CD4-positive, alpha-beta T cell (primary cell): ENCODE measurements at regions of chr6 and their contacts with region 1.

Region 1: DNA sequence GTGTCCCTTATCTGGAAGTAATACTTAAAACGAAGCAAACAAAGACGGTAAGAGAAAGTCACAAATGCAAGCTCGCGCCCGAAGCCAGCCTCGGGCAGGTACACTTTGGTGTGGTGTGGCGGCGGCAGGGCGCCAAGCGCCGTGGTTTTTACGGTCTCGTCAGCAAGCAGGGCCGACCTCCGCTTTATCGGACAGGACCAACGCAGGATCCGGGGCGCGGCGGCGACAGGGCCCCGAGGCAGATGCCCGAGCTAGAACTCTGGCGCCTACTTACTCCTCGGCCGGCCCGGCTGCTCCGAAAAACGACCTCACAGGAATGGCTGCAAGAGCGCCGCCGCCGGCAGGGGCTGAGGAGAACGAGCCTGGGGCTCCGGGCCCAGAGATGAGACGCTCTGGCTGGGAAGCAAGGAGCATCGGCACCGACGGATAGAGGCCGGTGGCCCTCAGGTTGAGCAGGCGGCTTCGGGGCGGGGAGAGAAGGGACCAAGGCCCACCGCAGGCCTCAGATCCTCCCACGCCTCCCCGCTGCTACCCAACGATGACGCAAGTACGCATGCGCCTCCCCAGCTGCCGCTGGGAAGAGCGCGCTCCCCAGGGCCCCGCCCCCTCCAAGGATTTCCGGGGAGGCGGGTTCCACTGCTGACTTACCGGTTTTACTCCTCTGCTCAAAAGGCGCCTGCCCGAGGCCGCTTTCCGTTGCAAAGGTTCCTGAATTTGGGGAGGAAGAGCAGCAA is 60.6 kb downstream of the FAM217A start:
- DNase-seq: peak; percentile 91 to 99 (median 94)
- ATAC-seq: peak; percentile 63
- H3K4me3 ChIP-seq: peak overlapping the region; percentile 92
- H3K4me3 Mint-ChIP-seq: peak overlapping the region; percentile 98
- H3K27ac ChIP-seq: peak overlapping the region; percentile 96
- H3K27ac Mint-ChIP-seq: peak overlapping the region; percentile 96
- H3K4me1 ChIP-seq: peaks cover 48% of the 10 kb centered on the region
- H3K4me1 Mint-ChIP-seq: peaks cover 84% of the 10 kb centered on the region
- H3K27me3 ChIP-seq: no peaks in the 10 kb centered on the region
- H3K27me3 Mint-ChIP-seq: no peaks in the 10 kb centered on the region
- CTCF ChIP-seq: peak; percentile 38

Region 2: GRCh38 chr6:2765166-2765895 is 1253.0 kb before region 1 on chr6 and contains the start of gene WRNIP1:
- CTCF ChIA-PET with region 1: no interaction called
- POLR2A ChIA-PET with region 1: interaction called, 4 read pairs
- intact Hi-C with region 1: loop called (anchors 5 to 10 kb)
- DNase-seq: peak; percentile 92 to 99 (median 96)
- ATAC-seq: peak; percentile 83
- H3K4me3 ChIP-seq: peak within 1 kb of the TSS; percentile 78
- H3K4me3 Mint-ChIP-seq: peak within 1 kb of the TSS; percentile 97
- H3K27ac ChIP-seq: peak within 1 kb of the TSS; percentile 80 to 96
- H3K27ac Mint-ChIP-seq: peak within 1 kb of the TSS; percentile 97
- H3K4me1 ChIP-seq: peaks cover 34% of the 10 kb centered on the region
- H3K4me1 Mint-ChIP-seq: peaks cover 61% of the 10 kb centered on the region
- H3K27me3 ChIP-seq: no peaks in the 10 kb centered on the region
- H3K27me3 Mint-ChIP-seq: no peaks in the 10 kb centered on the region
- CTCF ChIP-seq: peak; percentile 44
- total RNA-seq, gene WRNIP1: 22.4 to 25.2 TPM

Region 3: GRCh38 chr6:3258720-3259490 is 759.4 kb before region 1 on chr6 and contains the start of gene PSMG4:
- CTCF ChIA-PET with region 1: interaction called, 6 read pairs
- POLR2A ChIA-PET with region 1: interaction called, 8 read pairs
- intact Hi-C with region 1: loop called in 1 of 2 experiments (anchors 5 kb)
- DNase-seq: peak; percentile 83 to 96 (median 92)
- ATAC-seq: peak; percentile 74
- H3K4me3 ChIP-seq: peak within 1 kb of the TSS; percentile 80
- H3K4me3 Mint-ChIP-seq: peak within 1 kb of the TSS; percentile 96
- H3K27ac ChIP-seq: peak within 1 kb of the TSS in 1 of 2 donors; percentile 50
- H3K27ac Mint-ChIP-seq: peak within 1 kb of the TSS; percentile 92
- H3K4me1 ChIP-seq: peaks cover 45% of the 10 kb centered on the region
- H3K4me1 Mint-ChIP-seq: peaks cover 42% of the 10 kb centered on the region
- H3K27me3 ChIP-seq: no peaks in the 10 kb centered on the region
- H3K27me3 Mint-ChIP-seq: no peaks in the 10 kb centered on the region
- CTCF ChIP-seq: no peak
- total RNA-seq, gene PSMG4: 12.3 to 12.8 TPM

Region 4: GRCh38 chr6:3848925-3849605 is 169.3 kb before region 1 on chr6 and contains the start of gene FAM50B:
- CTCF ChIA-PET with region 1: interaction called, 13 read pairs
- POLR2A ChIA-PET with region 1: interaction called, 24 read pairs
- intact Hi-C with region 1: loop called in 1 of 2 experiments (anchors 5 kb)
- DNase-seq: peak; percentile 84 to 96 (median 91)
- ATAC-seq: peak; percentile 94
- H3K4me3 ChIP-seq: peak within 1 kb of the TSS; percentile 74
- H3K4me3 Mint-ChIP-seq: peak within 1 kb of the TSS; percentile 78
- H3K27ac ChIP-seq: peak within 1 kb of the TSS in 1 of 2 donors; percentile 58
- H3K27ac Mint-ChIP-seq: peak within 1 kb of the TSS; percentile 83
- H3K4me1 ChIP-seq: peaks cover 34% of the 10 kb centered on the region
- H3K4me1 Mint-ChIP-seq: peaks cover 20% of the 10 kb centered on the region
- H3K27me3 ChIP-seq: no peaks in the 10 kb centered on the region
- H3K27me3 Mint-ChIP-seq: no peaks in the 10 kb centered on the region
- CTCF ChIP-seq: peak; percentile 89
- total RNA-seq, gene FAM50B: 2.7 to 2.8 TPM

Region 5: GRCh38 chr6:4036581-4036980 is 18.2 kb after region 1 on chr6:
- CTCF ChIA-PET with region 1: interaction called, 8 read pairs
- POLR2A ChIA-PET with region 1: interaction called, 15 read pairs
- intact Hi-C with region 1: loop called in 1 of 2 experiments (anchors 2 kb)
- DNase-seq: no peak
- ATAC-seq: no peak
- H3K4me3 ChIP-seq: no peak overlapping the region
- H3K4me3 Mint-ChIP-seq: no peak overlapping the region
- H3K27ac ChIP-seq: no peak overlapping the region
- H3K27ac Mint-ChIP-seq: no peak overlapping the region
- H3K4me1 ChIP-seq: peaks cover 12% of the 10 kb centered on the region
- H3K4me1 Mint-ChIP-seq: peaks cover 64% of the 10 kb centered on the region
- H3K27me3 ChIP-seq: no peaks in the 10 kb centered on the region
- H3K27me3 Mint-ChIP-seq: no peaks in the 10 kb centered on the region
- CTCF ChIP-seq: no peak

Region 6: GRCh38 chr6:4543596-4543995 is 525.3 kb after region 1 on chr6:
- CTCF ChIA-PET with region 1: no interaction called
- POLR2A ChIA-PET with region 1: no interaction called
- intact Hi-C with region 1: no loop called
- DNase-seq: no peak
- ATAC-seq: no peak
- H3K4me3 ChIP-seq: no peak overlapping the region
- H3K4me3 Mint-ChIP-seq: no peak overlapping the region
- H3K27ac ChIP-seq: no peak overlapping the region
- H3K27ac Mint-ChIP-seq: no peak overlapping the region
- H3K4me1 ChIP-seq: no peaks in the 10 kb centered on the region
- H3K4me1 Mint-ChIP-seq: no peaks in the 10 kb centered on the region
- H3K27me3 ChIP-seq: peaks cover 0 to 5% of the 10 kb centered on the region in 2 experiments
- H3K27me3 Mint-ChIP-seq: peaks cover 7% of the 10 kb centered on the region
- CTCF ChIP-seq: no peak

Region 7: DNA sequence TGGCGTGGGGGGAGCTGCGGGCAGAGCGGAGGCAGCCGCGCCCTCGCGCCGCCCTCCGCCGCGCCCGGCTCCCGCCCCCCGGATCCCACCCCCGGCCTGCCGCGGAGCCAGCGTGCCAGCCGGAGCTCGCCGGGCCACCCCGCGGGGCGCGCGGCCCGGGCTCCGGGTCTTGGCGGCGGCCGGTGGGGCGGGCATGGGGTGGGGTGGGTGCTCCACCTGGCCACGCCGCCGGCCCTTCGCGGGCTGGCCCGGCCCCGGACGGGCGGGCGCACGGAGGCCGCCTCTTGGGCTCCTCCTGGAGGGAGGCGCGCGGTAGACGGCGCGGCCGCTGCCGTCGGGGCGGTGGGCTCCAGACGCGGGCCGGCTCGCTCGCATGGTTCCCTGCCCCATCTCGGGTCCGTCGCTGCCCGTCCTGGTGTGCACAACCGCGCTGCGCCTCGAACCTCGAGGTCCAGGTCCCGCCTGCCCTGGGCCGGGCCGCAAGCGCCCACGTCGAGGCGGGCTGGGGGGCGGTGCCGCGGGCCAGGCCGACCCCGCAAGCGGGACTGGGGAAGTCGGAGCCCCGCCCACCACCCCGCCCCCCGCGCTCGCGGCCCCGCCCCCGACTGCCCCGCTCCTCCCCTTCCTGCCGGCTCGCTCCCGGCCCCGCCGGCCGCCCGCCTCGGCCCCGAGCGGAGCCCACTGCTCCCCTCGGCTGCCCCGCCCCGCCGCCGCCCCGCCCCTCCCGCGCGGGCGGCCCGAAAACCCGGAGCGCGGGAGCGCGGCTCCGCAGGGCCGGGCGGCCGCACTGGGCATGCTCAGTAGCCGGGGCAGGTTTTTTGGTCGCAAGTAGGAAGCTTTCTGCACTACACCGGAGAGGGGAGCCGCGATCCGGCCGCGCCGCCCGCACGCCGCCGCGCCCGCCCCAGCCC is 757.5 kb after region 1 on chr6 and contains the start of gene CDYL:
- CTCF ChIA-PET with region 1: no interaction called
- POLR2A ChIA-PET with region 1: interaction called, 3 read pairs
- intact Hi-C with region 1: loop called in 1 of 2 experiments (anchors 10 kb)
- DNase-seq: peak; percentile 73 to 95 (median 88)
- ATAC-seq: peak; percentile 73
- H3K4me3 ChIP-seq: peak within 1 kb of the TSS; percentile 81
- H3K4me3 Mint-ChIP-seq: peak within 1 kb of the TSS; percentile 98
- H3K27ac ChIP-seq: no peak within 1 kb of the TSS
- H3K27ac Mint-ChIP-seq: peak within 1 kb of the TSS; percentile 87
- H3K4me1 ChIP-seq: peaks cover 18% of the 10 kb centered on the region
- H3K4me1 Mint-ChIP-seq: peaks cover 46% of the 10 kb centered on the region
- H3K27me3 ChIP-seq: no peaks in the 10 kb centered on the region
- H3K27me3 Mint-ChIP-seq: no peaks in the 10 kb centered on the region
- CTCF ChIP-seq: no peak
- total RNA-seq, gene CDYL: 23.8 to 23.9 TPM